Activated CD4-positive, alpha-beta memory T cell treated with anti-CD3 and anti-CD28 coated beads for 36 hours (primary cell): ENCODE measurements at regions of chrX and their contacts with region 1.

Region 1: DNA sequence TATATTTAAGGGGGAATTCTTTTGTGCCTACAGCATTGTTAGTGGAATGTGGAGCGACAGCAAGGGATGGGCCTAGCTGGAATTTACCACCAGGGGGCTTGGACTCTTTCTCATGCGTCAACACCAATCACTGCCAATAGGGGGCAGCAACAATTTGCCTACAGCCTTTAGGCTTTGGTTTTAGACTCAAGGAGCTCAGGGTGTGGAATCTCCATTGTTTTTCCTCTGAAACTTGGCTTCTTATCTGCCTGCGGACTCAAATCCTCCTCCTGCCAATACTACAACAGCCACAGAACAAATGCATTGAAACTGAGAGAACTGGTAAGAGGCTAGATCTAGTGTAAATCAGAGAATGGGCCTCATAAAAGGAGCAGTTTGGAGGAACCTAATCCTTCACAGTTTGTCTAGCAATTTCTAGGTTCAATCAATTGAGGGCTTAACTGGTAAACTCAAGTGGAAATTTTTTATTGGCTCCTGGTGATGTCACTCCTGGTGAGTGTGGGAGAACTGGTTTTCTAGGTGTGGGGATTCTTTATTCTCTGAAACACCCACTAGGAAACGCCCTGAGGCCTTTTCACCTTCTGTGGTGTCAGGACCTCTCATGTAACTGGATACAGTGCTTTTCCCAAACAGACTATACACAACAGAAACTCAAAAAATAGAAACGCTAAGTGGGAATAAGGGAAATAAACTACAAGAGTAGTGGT is 27.9 kb upstream of the TMSB4X start:
- DNase-seq: peak; percentile 80
- H3K4me3 Mint-ChIP-seq: peak overlapping the region; percentile 57
- H3K27ac Mint-ChIP-seq: peak overlapping the region; percentile 96
- H3K4me1 Mint-ChIP-seq: peaks cover 55% of the 10 kb centered on the region
- H3K27me3 Mint-ChIP-seq: no peaks in the 10 kb centered on the region

Region 2: GRCh38 chrX:12967711-12968465 is 20.9 kb after region 1 on chrX:
- CTCF ChIA-PET with region 1: interaction called, 26 read pairs
- POLR2A ChIA-PET with region 1: interaction called, 426 read pairs
- intact Hi-C with region 1: loop called (anchors 1 kb)
- DNase-seq: peak; percentile 56
- H3K4me3 Mint-ChIP-seq: peak overlapping the region; percentile 82
- H3K27ac Mint-ChIP-seq: peak overlapping the region; percentile 96
- H3K4me1 Mint-ChIP-seq: peaks cover 41% of the 10 kb centered on the region
- H3K27me3 Mint-ChIP-seq: no peaks in the 10 kb centered on the region

Region 3: DNA sequence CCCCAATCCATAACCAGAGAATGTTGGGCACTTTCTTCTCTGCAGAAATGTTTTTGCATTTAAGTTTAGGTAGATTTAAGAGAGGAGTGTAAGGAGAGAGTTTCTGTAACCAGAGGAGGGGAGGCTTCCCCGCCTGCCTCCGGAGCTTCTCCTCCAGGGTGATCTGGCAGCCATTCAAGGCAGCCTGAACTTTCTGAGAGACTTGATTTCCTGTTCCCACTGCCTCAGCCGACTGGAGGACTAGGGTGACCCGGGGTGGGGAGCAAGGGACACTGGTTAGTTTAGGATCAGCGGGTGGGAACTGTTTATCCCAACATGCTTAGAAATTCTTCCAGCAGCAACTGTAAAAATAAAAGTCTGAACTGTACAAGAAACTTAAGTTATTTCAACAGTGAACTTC is 82.3 kb after region 1 on chrX:
- CTCF ChIA-PET with region 1: no interaction called
- POLR2A ChIA-PET with region 1: no interaction called
- intact Hi-C with region 1: loop called (anchors 2 kb)
- DNase-seq: peak; percentile 22
- H3K4me3 Mint-ChIP-seq: no peak overlapping the region
- H3K27ac Mint-ChIP-seq: peak overlapping the region; percentile 81
- H3K4me1 Mint-ChIP-seq: peaks cover 77% of the 10 kb centered on the region
- H3K27me3 Mint-ChIP-seq: no peaks in the 10 kb centered on the region

Region 4: DNA sequence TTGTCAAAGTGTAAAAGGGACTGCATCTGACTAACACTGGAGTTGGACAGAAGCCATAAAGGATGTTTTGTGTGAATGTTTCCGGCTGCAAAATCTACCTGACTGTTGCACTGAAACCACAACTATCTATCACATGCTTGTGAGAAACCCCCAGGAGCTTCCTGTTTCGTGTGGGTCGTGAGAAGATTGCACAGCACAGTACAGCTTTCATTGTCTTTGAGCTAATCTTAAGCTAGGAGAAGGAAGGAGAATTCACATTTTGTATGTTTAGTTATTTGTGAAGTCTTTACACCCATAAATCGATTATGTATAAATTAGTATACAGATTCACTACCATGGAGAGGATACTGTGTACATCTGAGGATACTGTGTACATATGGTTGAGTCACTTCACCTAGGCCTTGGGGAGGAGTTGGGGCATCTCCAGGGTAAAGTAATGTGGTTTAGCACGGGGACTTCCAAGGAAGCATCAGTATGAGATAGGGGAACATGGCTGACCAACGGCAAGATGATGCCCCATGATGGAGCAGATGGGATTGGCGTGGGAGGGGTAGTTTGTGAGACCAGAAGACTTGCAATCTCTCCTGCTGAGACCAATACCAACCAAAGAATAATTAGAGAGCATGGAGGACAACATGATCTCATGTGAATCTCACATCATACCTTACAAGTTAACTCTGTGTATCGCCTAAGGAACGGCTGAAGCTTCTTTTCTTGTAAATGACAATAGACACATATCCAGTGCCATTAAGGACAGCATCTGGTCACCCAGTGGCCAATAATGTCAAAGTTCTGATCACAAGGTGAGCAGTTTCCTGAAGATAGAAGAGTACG is 140.5 kb after region 1 on chrX:
- CTCF ChIA-PET with region 1: interaction called, 81 read pairs
- POLR2A ChIA-PET with region 1: interaction called, 23 read pairs
- intact Hi-C with region 1: loop called (anchors 1 kb)
- DNase-seq: peak; percentile 76
- H3K4me3 Mint-ChIP-seq: peak overlapping the region; percentile 77
- H3K27ac Mint-ChIP-seq: peak overlapping the region; percentile 99
- H3K4me1 Mint-ChIP-seq: peaks cover 67% of the 10 kb centered on the region
- H3K27me3 Mint-ChIP-seq: no peaks in the 10 kb centered on the region

Region 5: GRCh38 chrX:13254076-13254785 is 307.2 kb after region 1 on chrX:
- CTCF ChIA-PET with region 1: interaction called, 3 read pairs
- POLR2A ChIA-PET with region 1: no interaction called
- intact Hi-C with region 1: loop called (anchors 2 kb)
- DNase-seq: peak; percentile 28
- H3K4me3 Mint-ChIP-seq: no peak overlapping the region
- H3K27ac Mint-ChIP-seq: no peak overlapping the region
- H3K4me1 Mint-ChIP-seq: peaks cover 54% of the 10 kb centered on the region
- H3K27me3 Mint-ChIP-seq: no peaks in the 10 kb centered on the region

Region 6: DNA sequence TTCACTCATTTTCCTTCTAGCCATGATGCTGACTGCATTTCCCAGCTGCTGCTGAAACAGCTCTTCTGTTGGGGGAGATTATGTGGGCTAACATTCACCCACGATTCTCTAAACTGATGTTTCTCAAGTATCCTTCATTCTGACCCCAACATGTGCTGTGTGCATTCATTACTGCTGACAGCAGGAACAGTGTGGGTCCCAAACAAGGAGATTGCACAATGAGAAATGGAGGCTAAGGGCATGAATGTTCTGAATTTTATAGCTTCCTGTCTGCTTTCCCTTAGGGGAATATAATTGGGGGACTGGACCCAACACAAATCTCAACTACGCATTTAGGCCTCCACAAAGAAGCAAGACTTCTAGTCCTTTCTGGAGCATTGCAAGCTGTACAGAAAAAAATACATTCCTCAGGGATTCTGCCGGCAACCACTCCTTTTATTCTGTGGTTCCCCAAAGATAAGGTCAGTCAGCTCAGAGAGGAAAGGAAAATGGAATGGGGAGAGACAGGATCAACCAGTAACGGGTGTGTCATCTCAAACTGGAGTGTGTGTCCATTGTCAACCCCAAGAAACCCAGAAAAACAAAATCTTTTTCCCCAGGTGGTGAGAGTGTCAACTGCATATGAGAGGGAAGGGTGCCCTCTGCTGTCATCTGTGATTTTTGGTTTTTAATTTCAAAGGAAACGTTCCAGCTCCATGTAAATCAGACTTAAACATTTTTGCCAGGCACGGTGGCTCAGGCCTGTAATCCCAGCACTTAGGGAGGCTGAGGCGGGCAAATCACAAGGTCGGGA is 540.9 kb after region 1 on chrX:
- CTCF ChIA-PET with region 1: interaction called, 107 read pairs
- POLR2A ChIA-PET with region 1: interaction called, 3 read pairs
- intact Hi-C with region 1: loop called (anchors 1 kb)
- DNase-seq: peak; percentile 39
- H3K4me3 Mint-ChIP-seq: no peak overlapping the region
- H3K27ac Mint-ChIP-seq: peak overlapping the region; percentile 56
- H3K4me1 Mint-ChIP-seq: peaks cover 11% of the 10 kb centered on the region
- H3K27me3 Mint-ChIP-seq: no peaks in the 10 kb centered on the region

Region 7: GRCh38 chrX:14029425-14030173 is 1082.6 kb after region 1 on chrX and contains the start of gene GEMIN8:
- CTCF ChIA-PET with region 1: interaction called, 3 read pairs
- POLR2A ChIA-PET with region 1: no interaction called
- intact Hi-C with region 1: loop called (anchors 2 kb)
- DNase-seq: peak; percentile 90
- H3K4me3 Mint-ChIP-seq: peak within 1 kb of the TSS; percentile 94
- H3K27ac Mint-ChIP-seq: peak within 1 kb of the TSS; percentile 94
- H3K4me1 Mint-ChIP-seq: peaks cover 25% of the 10 kb centered on the region
- H3K27me3 Mint-ChIP-seq: no peaks in the 10 kb centered on the region
- total RNA-seq, gene GEMIN8: 8.5 to 10.6 TPM